Aorta (tissue), 5 donors: ENCODE measurements at regions of chr9 and their contacts with region 1.

Region 1: GRCh38 chr9:9598723-9599122 is 1014.1 kb downstream of the PTPRD start:
- DNase-seq: no peak
- ATAC-seq: no peak
- H3K4me3 ChIP-seq: no peak overlapping the region
- H3K27ac ChIP-seq: no peak overlapping the region
- H3K4me1 ChIP-seq: no peaks in the 10 kb centered on the region
- H3K27me3 ChIP-seq: no peaks in the 10 kb centered on the region

Region 2: GRCh38 chr9:9942764-9943424 is 344.2 kb after region 1 on chr9:
- intact Hi-C with region 1: loop called in 1 of 2 experiments (anchors 10 kb)
- DNase-seq: peak; percentile 42 to 83
- ATAC-seq: peak; percentile 83
- H3K4me3 ChIP-seq: no peak overlapping the region
- H3K27ac ChIP-seq: no peak overlapping the region
- H3K4me1 ChIP-seq: no peaks in the 10 kb centered on the region
- H3K27me3 ChIP-seq: no peaks in the 10 kb centered on the region